CD14-positive monocyte (primary cell): ENCODE measurements at regions of chr19 and their contacts with region 1.

Region 1: GRCh38 chr19:36169084-36169760 is 17.0 kb upstream of the COX7A1 start:
- DNase-seq: no peak
- H3K4me3 ChIP-seq: no peak overlapping the region
- H3K4me3 Mint-ChIP-seq: no peak overlapping the region
- H3K27ac ChIP-seq: no peak overlapping the region
- H3K27ac Mint-ChIP-seq: peak overlapping the region in 1 of 7 donors; percentile 5
- H3K4me1 ChIP-seq: peaks cover 0 to 5% of the 10 kb centered on the region in 2 donors
- H3K4me1 Mint-ChIP-seq: peaks cover 3% of the 10 kb centered on the region
- H3K27me3 ChIP-seq: no peaks in the 10 kb centered on the region
- H3K27me3 Mint-ChIP-seq: no peaks in the 10 kb centered on the region
- CTCF ChIP-seq: no peak

Region 2: DNA sequence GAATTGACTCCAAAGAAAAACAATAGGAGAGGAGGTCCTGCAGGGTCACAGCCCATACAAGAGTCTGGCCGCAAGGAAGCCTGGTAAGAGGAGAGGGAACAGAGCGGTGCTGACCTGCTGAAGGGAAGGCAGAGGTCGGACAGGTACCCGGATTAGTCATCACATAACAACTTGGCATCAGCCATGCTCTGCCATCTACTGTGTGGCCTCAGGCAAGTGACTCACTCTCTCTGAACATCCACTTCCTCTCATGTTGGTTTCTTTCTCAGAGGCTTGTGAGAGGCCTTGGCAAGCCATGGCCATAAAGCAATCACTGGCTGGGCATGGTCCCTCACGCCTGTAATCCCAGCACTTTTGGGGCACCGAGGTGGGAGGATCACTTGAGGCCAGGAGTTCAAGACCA is 36.7 kb before region 1 on chr19:
- intact Hi-C with region 1: loop called (anchors 1 to 2 kb)
- DNase-seq: peak; percentile 79 to 91 (median 90)
- H3K4me3 ChIP-seq: no peak overlapping the region
- H3K4me3 Mint-ChIP-seq: peak overlapping the region in 1 of 2 donors; percentile 67
- H3K27ac ChIP-seq: peak overlapping the region; percentile 71 to 79
- H3K27ac Mint-ChIP-seq: peak overlapping the region; percentile 92 to 98 (median 95)
- H3K4me1 ChIP-seq: peaks cover 58 to 76% of the 10 kb centered on the region in 2 donors
- H3K4me1 Mint-ChIP-seq: peaks cover 59% of the 10 kb centered on the region
- H3K27me3 ChIP-seq: no peaks in the 10 kb centered on the region
- H3K27me3 Mint-ChIP-seq: peaks cover 0 to 5% (median 0%) of the 10 kb centered on the region in 3 donors
- CTCF ChIP-seq: no peak

Region 3: GRCh38 chr19:36214386-36215275 is 45.4 kb after region 1 on chr19 and contains the starts of genes ZNF146 and ZNF565:
- intact Hi-C with region 1: no loop called
- DNase-seq: peak; percentile 96 to 99 (median 96)
- H3K4me3 ChIP-seq: peak within 1 kb of the TSS; percentile 61 to 92 (median 69)
- H3K4me3 Mint-ChIP-seq: no peak within 1 kb of the TSS
- H3K27ac ChIP-seq: peak within 1 kb of the TSS; percentile 72 to 95
- H3K27ac Mint-ChIP-seq: no peak within 1 kb of the TSS
- H3K4me1 ChIP-seq: peaks cover 11 to 18% of the 10 kb centered on the region in 2 donors
- H3K4me1 Mint-ChIP-seq: peaks cover 5% of the 10 kb centered on the region
- H3K27me3 ChIP-seq: no peaks in the 10 kb centered on the region
- H3K27me3 Mint-ChIP-seq: no peaks in the 10 kb centered on the region
- CTCF ChIP-seq: no peak
- polyA plus RNA-seq, gene ZNF146: 12.2 to 26.5 (median 15.8) TPM
- polyA plus RNA-seq, gene ZNF565: 1.5 to 3.5 (median 2.1) TPM